CD4-positive, alpha-beta T cell (primary cell): ENCODE measurements at regions of chr16 and their contacts with region 1.

Region 1: DNA sequence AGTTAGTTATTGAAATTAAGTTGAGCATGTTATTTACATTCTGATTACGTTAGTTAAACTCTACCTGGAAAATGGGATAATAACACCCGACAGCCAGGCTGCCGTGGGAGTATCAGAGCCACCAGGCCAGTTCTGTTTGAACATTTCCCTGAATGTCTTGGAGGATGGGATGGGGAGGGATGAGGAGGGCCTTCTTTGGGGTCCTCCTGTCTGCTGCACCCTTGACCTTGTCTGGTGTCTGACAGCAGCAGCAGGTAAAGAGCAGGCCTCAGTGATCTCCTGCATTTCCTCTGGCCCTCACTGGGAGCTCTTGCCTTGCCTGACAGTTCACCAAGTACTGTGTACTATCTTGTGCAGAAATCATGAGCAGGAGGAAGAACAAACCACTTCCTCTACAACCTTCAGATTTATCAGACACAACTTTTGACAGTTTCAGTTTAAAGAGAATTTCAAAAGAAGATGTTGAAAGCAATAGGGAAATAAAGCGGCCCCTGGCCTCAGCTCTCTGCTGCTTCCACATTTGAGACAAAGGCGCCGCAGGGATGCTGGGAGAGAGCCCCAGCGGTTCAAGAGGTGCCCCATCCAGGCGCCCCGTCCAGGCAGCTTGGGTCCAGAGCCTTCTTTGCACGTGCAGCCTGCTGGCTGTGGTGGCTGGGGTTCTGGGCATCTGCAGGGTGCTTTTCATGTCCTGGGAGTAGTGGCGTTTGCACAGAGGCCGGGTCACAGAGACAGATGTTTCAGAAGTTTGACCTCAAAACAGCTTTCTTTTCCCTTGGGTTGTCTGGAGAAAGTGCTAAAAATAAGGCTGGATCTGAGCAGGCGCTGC is 25.3 kb downstream of the CMIP start:
- DNase-seq: peak in 13 of 14 experiments; percentile 14 to 85 (median 33)
- ATAC-seq: peak; percentile 95
- H3K4me3 ChIP-seq: peak overlapping the region; percentile 33
- H3K4me3 Mint-ChIP-seq: peak overlapping the region; percentile 70
- H3K27ac ChIP-seq: peak overlapping the region; percentile 49 to 81
- H3K27ac Mint-ChIP-seq: peak overlapping the region; percentile 86
- H3K4me1 ChIP-seq: peaks cover 87% of the 10 kb centered on the region
- H3K4me1 Mint-ChIP-seq: peaks cover 81% of the 10 kb centered on the region
- H3K27me3 ChIP-seq: no peaks in the 10 kb centered on the region
- H3K27me3 Mint-ChIP-seq: no peaks in the 10 kb centered on the region
- CTCF ChIP-seq: no peak

Region 2: GRCh38 chr16:81451753-81452680 is 17.9 kb before region 1 on chr16:
- CTCF ChIA-PET with region 1: no interaction called
- POLR2A ChIA-PET with region 1: interaction called, 20 read pairs
- intact Hi-C with region 1: loop called in 1 of 2 experiments (anchors 2 kb)
- DNase-seq: peak in 11 of 14 experiments; percentile 19 to 75 (median 43)
- ATAC-seq: peak; percentile 93
- H3K4me3 ChIP-seq: no peak overlapping the region
- H3K4me3 Mint-ChIP-seq: peak overlapping the region; percentile 73
- H3K27ac ChIP-seq: peak overlapping the region in 1 of 2 donors; percentile 0
- H3K27ac Mint-ChIP-seq: peak overlapping the region; percentile 93
- H3K4me1 ChIP-seq: peaks cover 61% of the 10 kb centered on the region
- H3K4me1 Mint-ChIP-seq: peaks cover 81% of the 10 kb centered on the region
- H3K27me3 ChIP-seq: no peaks in the 10 kb centered on the region
- H3K27me3 Mint-ChIP-seq: no peaks in the 10 kb centered on the region
- CTCF ChIP-seq: no peak

Region 3: DNA sequence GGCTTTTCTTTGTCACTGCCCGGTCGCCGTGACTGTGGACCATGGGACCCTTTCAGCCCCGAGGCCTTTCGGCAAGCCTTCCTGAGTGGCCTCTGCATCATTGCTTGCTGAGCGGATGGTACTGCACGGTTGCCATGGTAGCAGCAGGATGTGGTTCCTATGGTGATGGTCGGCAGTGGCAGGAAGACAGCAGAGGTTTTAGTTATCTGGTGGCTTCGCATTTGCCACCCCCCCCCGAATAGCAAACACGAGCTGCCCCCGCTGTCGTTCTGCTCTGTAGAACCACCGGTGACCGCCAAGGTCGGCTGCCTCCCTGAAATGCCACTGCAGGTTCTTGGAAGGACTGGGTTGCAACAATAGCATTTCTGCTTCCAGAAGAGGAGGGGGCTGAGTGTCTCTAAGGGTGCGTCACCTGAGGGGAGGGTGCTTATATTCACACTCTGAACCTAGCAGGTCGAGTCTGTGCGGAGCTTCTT is 51.3 kb after region 1 on chr16:
- CTCF ChIA-PET with region 1: no interaction called
- POLR2A ChIA-PET with region 1: interaction called, 5 read pairs
- intact Hi-C with region 1: loop called in 1 of 2 experiments (anchors 2 kb)
- DNase-seq: peak; percentile 52 to 94 (median 70)
- ATAC-seq: peak; percentile 62
- H3K4me3 ChIP-seq: no peak overlapping the region
- H3K4me3 Mint-ChIP-seq: no peak overlapping the region
- H3K27ac ChIP-seq: peak overlapping the region; percentile 5 to 68
- H3K27ac Mint-ChIP-seq: peak overlapping the region; percentile 81
- H3K4me1 ChIP-seq: peaks cover 64% of the 10 kb centered on the region
- H3K4me1 Mint-ChIP-seq: peaks cover 56% of the 10 kb centered on the region
- H3K27me3 ChIP-seq: no peaks in the 10 kb centered on the region
- H3K27me3 Mint-ChIP-seq: no peaks in the 10 kb centered on the region
- CTCF ChIP-seq: no peak

Region 4: DNA sequence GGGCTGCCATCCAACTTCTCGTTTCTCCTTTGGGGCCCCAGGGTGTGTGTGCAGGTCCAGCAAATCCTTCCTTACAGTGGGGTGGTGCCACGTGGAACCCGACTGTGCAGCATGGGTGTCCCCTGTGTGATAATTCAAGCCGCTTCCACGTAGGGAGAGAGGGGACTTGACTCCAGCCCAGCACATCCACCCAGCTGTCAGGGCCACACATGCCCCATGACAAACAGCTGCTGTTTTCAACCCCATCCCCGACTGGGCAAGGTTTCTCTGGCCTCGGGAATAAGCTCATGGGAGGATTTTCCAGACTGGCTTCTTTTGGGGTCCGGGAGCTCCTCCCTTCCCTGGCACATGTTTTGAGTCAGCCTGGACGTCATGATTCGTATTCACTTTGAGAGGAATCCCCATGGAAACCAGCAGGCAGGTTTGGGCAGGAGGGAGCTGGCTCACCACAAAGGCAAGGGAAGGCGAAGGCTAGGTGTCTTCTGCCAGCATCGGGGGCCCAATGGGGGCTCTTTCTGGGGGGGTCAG is 131.0 kb after region 1 on chr16:
- CTCF ChIA-PET with region 1: no interaction called
- POLR2A ChIA-PET with region 1: no interaction called
- intact Hi-C with region 1: no loop called
- DNase-seq: no peak
- ATAC-seq: no peak
- H3K4me3 ChIP-seq: no peak overlapping the region
- H3K4me3 Mint-ChIP-seq: no peak overlapping the region
- H3K27ac ChIP-seq: no peak overlapping the region
- H3K27ac Mint-ChIP-seq: no peak overlapping the region
- H3K4me1 ChIP-seq: no peaks in the 10 kb centered on the region
- H3K4me1 Mint-ChIP-seq: peaks cover 16% of the 10 kb centered on the region
- H3K27me3 ChIP-seq: no peaks in the 10 kb centered on the region
- H3K27me3 Mint-ChIP-seq: no peaks in the 10 kb centered on the region
- CTCF ChIP-seq: no peak